Activated T-helper 1 cell treated with anti-CD3 and anti-CD28 coated beads, Interleukin-12 subunit alpha, Interleukin-12 subunit beta, Interleukin-2, Interleukin-4 antibody, amounts not matched to agents 30 ng/mL and 10 ng/mL and 1 ng/mL, durations not matched to agents 14 hours and 24 hours and 36 hours (primary cell): ENCODE measurements at regions of chr15 and their contacts with region 1.

Region 1: GRCh38 chr15:64093627-64094417 is at the start of gene CIAO2A:
- DNase-seq: peak; percentile 92
- H3K4me3 Mint-ChIP-seq: peak within 1 kb of the TSS; percentile 96
- H3K27ac Mint-ChIP-seq: peak within 1 kb of the TSS; percentile 92
- H3K4me1 Mint-ChIP-seq: peaks cover 46% of the 10 kb centered on the region
- H3K27me3 Mint-ChIP-seq: no peaks in the 10 kb centered on the region
- total RNA-seq, gene CIAO2A: 70.1 and 87.1 TPM in 2 replicates

Region 2: GRCh38 chr15:63504247-63504978 is 589.4 kb before region 1 on chr15 and contains the start of gene USP3:
- intact Hi-C with region 1: loop called (anchors 5 kb)
- DNase-seq: peak; percentile 91
- H3K4me3 Mint-ChIP-seq: peak within 1 kb of the TSS; percentile 93
- H3K27ac Mint-ChIP-seq: peak within 1 kb of the TSS; percentile 93
- H3K4me1 Mint-ChIP-seq: peaks cover 83% of the 10 kb centered on the region
- H3K27me3 Mint-ChIP-seq: no peaks in the 10 kb centered on the region
- total RNA-seq, gene USP3: 46.9 and 58.9 TPM in 2 replicates

Region 3: GRCh38 chr15:63833021-63833696 is 260.7 kb before region 1 on chr15:
- intact Hi-C with region 1: loop called (anchors 1 kb)
- DNase-seq: peak; percentile 25
- H3K4me3 Mint-ChIP-seq: peak overlapping the region; percentile 91
- H3K27ac Mint-ChIP-seq: peak overlapping the region; percentile 96
- H3K4me1 Mint-ChIP-seq: peaks cover 48% of the 10 kb centered on the region
- H3K27me3 Mint-ChIP-seq: peaks cover 5% of the 10 kb centered on the region

Region 4: GRCh38 chr15:63848499-63849214 is 245.2 kb before region 1 on chr15:
- intact Hi-C with region 1: no loop called
- DNase-seq: no peak
- H3K4me3 Mint-ChIP-seq: no peak overlapping the region
- H3K27ac Mint-ChIP-seq: peak overlapping the region; percentile 47
- H3K4me1 Mint-ChIP-seq: peaks cover 16% of the 10 kb centered on the region
- H3K27me3 Mint-ChIP-seq: peaks cover 2% of the 10 kb centered on the region

Region 5: DNA sequence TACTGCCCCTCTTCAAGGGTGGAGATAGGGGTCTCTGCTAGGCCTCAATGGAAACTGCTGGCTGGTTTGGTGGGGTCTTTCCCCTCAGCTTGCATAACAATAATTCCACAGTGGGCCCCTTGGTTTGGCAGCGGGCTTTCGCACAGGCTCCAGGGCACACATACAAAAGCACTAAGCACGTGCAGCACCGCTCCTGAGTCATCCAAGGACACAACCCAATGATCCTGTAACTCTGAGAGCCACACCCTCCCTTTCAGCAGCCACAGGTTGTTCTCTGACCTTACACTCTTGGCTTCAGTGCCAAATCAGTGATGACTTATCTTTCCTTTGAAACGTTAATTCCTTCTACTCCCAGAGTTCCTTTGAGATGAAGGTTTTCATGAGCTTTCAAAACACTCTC is 89.2 kb before region 1 on chr15:
- intact Hi-C with region 1: no loop called
- DNase-seq: no peak
- H3K4me3 Mint-ChIP-seq: no peak overlapping the region
- H3K27ac Mint-ChIP-seq: no peak overlapping the region
- H3K4me1 Mint-ChIP-seq: peaks cover 73% of the 10 kb centered on the region
- H3K27me3 Mint-ChIP-seq: peaks cover 2% of the 10 kb centered on the region

Region 6: DNA sequence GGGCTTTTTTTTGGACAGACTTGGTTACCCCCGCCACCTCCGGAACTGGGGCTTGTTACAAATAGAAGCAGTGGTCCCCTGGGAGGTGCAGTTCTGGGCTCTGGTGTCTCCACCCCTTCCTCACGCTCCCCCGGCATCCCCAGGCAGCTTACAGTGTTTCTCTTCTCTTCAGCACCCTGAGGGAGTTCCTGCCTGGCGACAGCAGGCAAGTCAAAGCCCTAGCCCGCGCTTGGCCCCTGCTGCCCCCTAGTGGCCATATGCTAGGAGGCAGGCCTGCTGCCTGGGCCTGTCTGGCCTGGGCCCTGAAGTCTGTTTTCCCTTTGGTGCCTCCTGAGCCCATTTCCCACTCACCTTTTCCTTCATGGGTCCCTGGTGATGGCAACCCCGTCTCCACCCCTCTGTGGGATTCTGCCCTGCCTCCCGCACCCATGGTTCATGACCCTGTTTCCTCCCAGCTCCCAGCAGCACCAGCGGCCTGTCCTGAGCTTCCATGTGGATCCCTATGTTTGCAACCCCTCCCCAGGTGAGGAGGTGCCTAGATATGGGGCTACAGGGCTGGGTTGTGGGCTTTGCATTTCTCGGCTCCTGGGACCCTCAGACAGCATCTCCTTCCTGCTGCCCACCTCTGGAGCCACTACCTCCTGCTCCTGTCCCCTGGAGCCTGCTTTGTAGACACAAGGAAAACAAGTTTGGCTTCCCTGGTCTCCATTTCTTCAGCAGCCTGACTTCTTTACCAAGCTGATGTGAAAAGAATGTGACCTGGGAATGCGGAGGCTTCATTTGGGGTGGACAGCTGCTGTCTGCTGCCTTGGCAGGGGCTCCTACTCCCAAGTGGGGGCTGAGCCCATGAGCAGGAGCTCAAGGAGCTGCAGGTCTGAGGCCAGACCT is 59.9 kb after region 1 on chr15:
- intact Hi-C with region 1: loop called (anchors 1 kb)
- DNase-seq: peak; percentile 87
- H3K4me3 Mint-ChIP-seq: peak overlapping the region; percentile 80
- H3K27ac Mint-ChIP-seq: peak overlapping the region; percentile 75
- H3K4me1 Mint-ChIP-seq: peaks cover 25% of the 10 kb centered on the region
- H3K27me3 Mint-ChIP-seq: peaks cover 5% of the 10 kb centered on the region

Region 7: GRCh38 chr15:64355944-64356709 is 262.3 kb after region 1 on chr15 and contains the start of gene CSNK1G1:
- intact Hi-C with region 1: loop called (anchors 1 kb)
- DNase-seq: peak; percentile 87
- H3K4me3 Mint-ChIP-seq: peak within 1 kb of the TSS; percentile 96
- H3K27ac Mint-ChIP-seq: peak within 1 kb of the TSS; percentile 97
- H3K4me1 Mint-ChIP-seq: peaks cover 19% of the 10 kb centered on the region
- H3K27me3 Mint-ChIP-seq: no peaks in the 10 kb centered on the region
- total RNA-seq, gene CSNK1G1: 31.3 and 33.2 TPM in 2 replicates

Region 8: GRCh38 chr15:64989416-64990167 is 895.8 kb after region 1 on chr15 and contains the start of gene SPG21:
- intact Hi-C with region 1: loop called (anchors 5 kb)
- DNase-seq: peak; percentile 92
- H3K4me3 Mint-ChIP-seq: peak within 1 kb of the TSS; percentile 99
- H3K27ac Mint-ChIP-seq: peak within 1 kb of the TSS; percentile 93
- H3K4me1 Mint-ChIP-seq: peaks cover 51% of the 10 kb centered on the region
- H3K27me3 Mint-ChIP-seq: no peaks in the 10 kb centered on the region
- total RNA-seq, gene SPG21: 70.2 and 73.3 TPM in 2 replicates